Posterior vena cava (tissue), 2 donors: ENCODE measurements at regions of chrX and their contacts with region 1.

Region 1: DNA sequence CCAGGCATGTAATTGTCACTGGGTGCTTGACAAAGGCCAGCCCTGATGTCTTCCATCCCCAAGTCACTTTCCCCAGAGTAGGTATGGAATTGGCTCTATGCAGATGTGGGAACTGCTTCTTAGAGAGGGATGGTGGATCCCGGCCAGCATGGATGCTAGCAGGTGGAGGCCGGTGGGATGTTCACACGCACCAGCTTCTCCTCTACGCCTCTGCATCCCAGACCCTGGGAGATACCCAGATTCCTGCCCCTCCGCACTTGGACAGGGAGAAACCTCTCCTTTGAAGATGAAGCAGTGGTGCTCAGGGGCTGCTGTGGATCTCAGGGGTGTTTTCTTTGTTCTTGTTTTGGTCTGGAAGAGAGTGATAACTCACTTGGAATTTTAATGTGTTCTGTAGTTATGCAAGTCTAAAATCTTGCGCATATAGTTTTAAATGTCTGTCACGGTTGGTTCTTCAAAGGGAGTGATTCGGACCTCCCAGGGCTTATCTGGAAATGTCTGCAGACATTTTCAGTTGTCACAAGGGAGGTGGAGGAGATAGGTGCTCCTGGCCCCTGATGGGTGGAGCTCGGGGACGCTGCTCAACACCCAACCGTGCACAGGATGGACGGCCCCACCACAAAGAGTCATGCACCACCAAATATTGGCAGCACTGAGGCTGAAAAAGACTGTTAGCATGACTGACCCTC is 308.0 kb downstream of the DHRSX start:
- DNase-seq: no peak

Region 2: GRCh38 chrX:2226182-2226581 is 33.5 kb after region 1 on chrX:
- intact Hi-C with region 1: loop called in 1 of 2 experiments (anchors 1 kb)
- DNase-seq: no peak

Region 3: DNA sequence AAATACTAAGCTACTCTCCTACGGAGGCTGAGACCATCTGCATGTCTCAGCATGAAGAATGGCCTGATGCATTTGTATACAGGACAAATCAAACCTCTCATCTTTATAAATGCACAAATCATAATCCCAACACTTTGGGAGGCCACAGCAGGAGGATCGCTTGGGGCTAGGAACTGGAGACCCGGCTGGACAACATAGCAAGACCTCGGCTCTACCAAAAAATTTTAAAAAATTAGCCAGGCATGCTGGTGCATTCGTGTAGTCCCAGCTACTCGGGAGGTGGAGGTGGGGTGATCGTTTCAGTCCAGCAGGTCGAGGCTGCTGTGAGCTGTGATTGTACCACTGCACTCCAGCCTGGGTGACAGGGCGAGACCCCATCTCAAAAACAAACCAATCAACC is 45.2 kb after region 1 on chrX:
- intact Hi-C with region 1: loop called in 1 of 2 experiments (anchors 1 kb)
- DNase-seq: peak; percentile 19